AG04450 (cell line): ENCODE measurements at regions of chr14 and their contacts with region 1.

Region 1: DNA sequence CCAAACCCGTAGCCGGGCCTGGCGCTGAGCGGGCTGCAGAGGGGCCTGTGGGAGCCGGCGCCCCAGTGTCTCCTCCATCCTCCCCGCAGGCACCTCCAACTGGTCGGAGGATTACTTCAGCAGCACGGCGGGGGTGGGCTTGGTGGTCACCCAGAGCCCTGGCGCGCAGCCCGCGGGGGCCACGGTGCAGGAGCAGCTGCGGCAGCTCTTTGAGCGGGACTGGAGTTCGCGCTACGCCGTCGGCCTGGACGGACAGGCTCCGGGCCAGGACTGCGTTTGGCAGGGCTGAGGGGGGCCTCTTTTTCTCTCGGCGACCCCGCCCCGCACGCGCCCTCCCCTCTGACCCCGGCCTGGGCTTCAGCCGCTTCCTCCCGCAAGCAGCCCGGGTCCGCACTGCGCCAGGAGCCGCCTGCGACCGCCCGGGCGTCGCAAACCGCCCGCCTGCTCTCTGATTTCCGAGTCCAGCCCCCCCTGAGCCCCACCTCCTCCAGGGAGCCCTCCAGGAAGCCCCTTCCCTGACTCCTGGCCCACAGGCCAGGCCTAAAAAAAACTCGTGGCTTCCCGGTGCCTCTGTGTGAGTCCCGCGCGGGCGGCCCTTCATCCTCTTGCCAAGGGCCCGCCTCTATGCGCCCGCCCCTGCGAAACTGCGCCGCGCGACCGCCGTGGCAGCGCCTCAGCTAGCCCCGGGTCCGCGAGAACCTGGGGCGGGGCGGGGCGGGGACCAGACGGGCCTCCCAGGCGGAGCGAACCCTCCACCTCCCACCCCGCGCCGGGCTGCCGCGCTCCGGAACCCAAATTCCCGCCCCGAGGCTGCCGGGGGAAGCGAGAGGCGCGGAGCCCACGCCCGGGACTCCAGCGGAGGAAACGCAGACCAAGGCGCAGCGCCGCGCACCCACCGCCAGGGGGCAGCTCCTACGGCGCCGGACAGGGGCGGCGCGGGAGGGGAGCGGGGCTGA is 8.3 kb downstream of the PLD4 start:
- DNase-seq: peak; percentile 32
- H3K4me3 ChIP-seq: peak overlapping the region; percentile 48
- H3K27ac ChIP-seq: no peak overlapping the region
- H3K27me3 ChIP-seq: peaks cover 41% of the 10 kb centered on the region
- CTCF ChIP-seq: peak; percentile 61

Region 2: GRCh38 chr14:104865081-104865643 is 67.8 kb before region 1 on chr14 and contains the start of gene CEP170B:
- CTCF ChIA-PET with region 1: no interaction called
- POLR2A ChIA-PET with region 1: no interaction called
- DNase-seq: no peak
- H3K4me3 ChIP-seq: peak within 1 kb of the TSS; percentile 77
- H3K27ac ChIP-seq: peak within 1 kb of the TSS; percentile 31
- H3K27me3 ChIP-seq: peaks cover 21% of the 10 kb centered on the region
- CTCF ChIP-seq: no peak
- polyA plus RNA-seq, gene CEP170B: 4.2 and 4.3 TPM in 2 replicates

Region 3: GRCh38 chr14:104976198-104977007 is 43.4 kb after region 1 on chr14:
- CTCF ChIA-PET with region 1: interaction called, 11 read pairs
- POLR2A ChIA-PET with region 1: interaction called, 3 read pairs
- DNase-seq: peak; percentile 46
- H3K4me3 ChIP-seq: no peak overlapping the region
- H3K27ac ChIP-seq: no peak overlapping the region
- H3K27me3 ChIP-seq: no peaks in the 10 kb centered on the region
- CTCF ChIP-seq: peak; percentile 92